ENCODE measurements at regions of chr9 and their contacts with region 1.

Region 1: GRCh38 chr9:114033397-114034103 is 44.5 kb downstream of the AMBP start:
- DNase-seq: peak; percentile 59
- ATAC-seq: peak; percentile 86

Region 2: GRCh38 chr9:113682297-113682771 is 351.2 kb before region 1 on chr9:
- intact Hi-C with region 1: loop called (anchors 10 kb)
- DNase-seq: peak; percentile 71
- ATAC-seq: peak; percentile 71

Region 3: DNA sequence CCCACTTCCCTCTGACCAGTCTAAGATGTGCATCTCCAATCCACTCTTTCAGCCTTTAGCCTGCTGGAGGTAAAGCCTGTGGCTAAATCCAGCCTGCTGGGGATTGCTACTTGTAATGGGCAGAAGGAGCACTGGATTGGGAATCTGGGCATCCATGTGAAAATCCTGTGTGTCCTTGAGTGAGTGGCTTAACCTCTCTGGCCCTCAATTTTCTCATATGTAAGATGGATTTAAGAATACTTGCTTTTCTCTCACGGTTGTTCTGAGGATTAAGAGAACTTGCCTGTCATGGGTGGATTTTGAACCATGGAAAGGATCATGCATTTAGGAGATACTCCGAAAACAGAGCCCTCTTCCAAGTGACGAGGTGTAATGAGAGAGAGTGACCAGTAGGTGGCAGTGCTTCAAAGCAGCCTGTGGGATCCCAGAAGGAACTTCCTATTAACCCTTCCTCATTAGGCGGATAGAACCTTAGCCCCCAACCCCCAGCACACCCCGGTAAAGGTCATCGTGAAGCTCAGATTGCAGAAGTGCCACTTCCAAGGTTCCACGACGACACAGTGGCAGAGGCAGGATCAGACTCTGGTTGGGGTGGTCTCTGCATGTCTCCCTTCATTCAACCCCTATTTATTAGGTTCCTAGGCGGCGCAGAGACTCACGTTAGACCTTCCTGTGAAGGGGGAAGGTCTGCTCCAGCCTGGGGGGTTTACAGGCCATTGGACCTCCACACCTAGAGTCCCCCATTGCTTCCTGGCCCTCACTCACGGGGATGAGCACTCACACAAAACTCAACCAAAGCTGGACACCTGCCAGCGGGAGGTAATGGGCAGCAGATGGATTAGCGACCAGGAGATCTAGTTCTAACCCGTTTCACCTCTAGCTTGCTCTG is 226.1 kb before region 1 on chr9:
- intact Hi-C with region 1: loop called (anchors 2 kb)
- DNase-seq: no peak
- ATAC-seq: peak; percentile 88